GM23248 (cell line): ENCODE measurements at regions of chr9 and their contacts with region 1.

Region 1: DNA sequence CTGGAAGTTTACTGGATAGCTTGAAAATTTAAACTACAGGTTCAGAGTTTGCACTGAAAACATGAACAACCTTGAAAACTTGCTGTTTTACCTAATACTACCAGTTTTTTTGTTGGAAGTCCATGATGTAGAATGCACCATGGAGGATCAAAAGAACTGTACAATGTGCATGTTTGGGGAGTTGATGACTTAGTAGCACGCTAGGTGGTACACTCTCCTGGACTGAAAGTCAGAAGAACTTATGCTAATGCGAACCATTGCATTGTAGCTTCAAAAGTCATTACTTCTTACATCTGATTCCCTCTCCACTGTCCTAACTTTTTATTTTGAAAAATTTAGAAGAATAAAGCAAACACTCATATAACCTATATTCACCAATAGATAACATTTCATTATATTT is 211.0 kb downstream of the OSTF1 start:
- DNase-seq: no peak
- H3K4me3 ChIP-seq: no peak overlapping the region
- H3K27ac ChIP-seq: no peak overlapping the region
- H3K4me1 ChIP-seq: no peaks in the 10 kb centered on the region
- H3K27me3 ChIP-seq: no peaks in the 10 kb centered on the region

Region 2: GRCh38 chr9:75826314-75826713 is 527.0 kb after region 1 on chr9:
- in situ Hi-C with region 1: loop called (anchors 25 kb)
- DNase-seq: no peak
- H3K4me3 ChIP-seq: no peak overlapping the region
- H3K27ac ChIP-seq: no peak overlapping the region
- H3K4me1 ChIP-seq: no peaks in the 10 kb centered on the region
- H3K27me3 ChIP-seq: no peaks in the 10 kb centered on the region

Region 3: DNA sequence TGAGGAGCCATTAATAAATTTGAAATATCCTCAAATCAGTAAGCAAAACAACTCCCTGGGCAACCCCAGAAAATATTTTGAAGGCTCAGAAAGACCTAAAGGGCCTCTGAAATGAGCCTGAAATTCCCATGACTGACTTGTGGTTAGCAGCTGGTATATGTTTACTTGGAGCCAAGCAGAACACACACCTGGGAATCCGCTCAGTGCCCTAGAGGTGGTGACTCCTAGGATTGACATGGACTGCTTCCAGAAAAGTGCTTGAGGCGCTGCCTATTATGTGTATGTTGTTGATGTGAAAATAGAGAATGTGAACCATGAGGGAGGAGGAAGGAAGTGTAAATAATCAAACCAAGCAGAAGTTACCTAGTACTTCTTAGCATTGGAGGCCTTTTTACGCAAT is 1080.2 kb after region 1 on chr9:
- in situ Hi-C with region 1: no loop called
- DNase-seq: no peak
- H3K4me3 ChIP-seq: no peak overlapping the region
- H3K27ac ChIP-seq: no peak overlapping the region
- H3K4me1 ChIP-seq: peaks cover 12% of the 10 kb centered on the region
- H3K27me3 ChIP-seq: no peaks in the 10 kb centered on the region